AG04450 (cell line): ENCODE measurements at regions of chr10 and their contacts with region 1.

Region 1: DNA sequence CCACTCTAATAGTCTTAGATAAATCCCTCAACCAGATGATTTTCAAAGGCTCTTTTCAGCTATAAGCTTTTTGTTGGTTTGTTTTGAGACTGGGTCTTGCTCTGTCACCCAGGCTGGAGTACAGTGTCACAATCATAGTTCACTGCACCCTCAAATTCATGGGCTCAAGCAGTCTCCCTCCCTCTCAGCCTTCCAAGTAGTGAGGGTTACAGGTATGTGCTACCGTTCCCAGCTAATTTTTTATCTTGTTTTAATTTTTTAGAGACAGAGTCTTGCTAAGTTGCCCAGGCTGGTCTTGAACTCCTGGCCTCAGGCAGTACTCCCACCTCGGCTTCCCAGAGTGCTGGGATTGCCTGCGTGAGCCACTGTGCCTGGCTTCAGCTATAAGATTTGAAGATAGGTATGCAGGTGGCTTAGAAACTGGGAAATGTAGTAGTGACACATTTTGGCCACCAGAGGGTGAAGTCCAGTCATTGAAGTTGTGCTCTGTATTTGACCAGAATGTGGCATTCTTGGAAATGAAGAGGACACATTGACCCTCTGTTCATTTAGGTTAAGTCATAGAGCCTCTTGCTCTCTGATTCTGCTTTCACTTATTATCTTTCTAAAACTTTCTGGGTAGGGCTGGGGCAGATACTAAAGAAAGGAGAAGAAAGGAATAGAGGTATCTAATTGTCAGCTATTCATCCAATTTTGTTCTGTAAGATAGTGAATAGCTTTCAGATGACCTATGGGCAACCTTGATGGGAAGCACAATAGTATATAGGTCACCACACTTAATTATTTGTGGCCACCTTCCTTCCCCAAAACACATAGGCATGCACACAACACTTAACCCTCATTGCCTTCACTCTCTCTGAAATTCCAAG is 36.0 kb downstream of the R3HCC1L start:
- DNase-seq: peak; percentile 20
- H3K4me3 ChIP-seq: no peak overlapping the region
- H3K27ac ChIP-seq: no peak overlapping the region
- H3K27me3 ChIP-seq: no peaks in the 10 kb centered on the region
- CTCF ChIP-seq: peak; percentile 76

Region 2: GRCh38 chr10:98016772-98017475 is 153.6 kb before region 1 on chr10:
- CTCF ChIA-PET with region 1: no interaction called
- POLR2A ChIA-PET with region 1: no interaction called
- DNase-seq: no peak
- H3K4me3 ChIP-seq: no peak overlapping the region
- H3K27ac ChIP-seq: no peak overlapping the region
- H3K27me3 ChIP-seq: peaks cover 3% of the 10 kb centered on the region
- CTCF ChIP-seq: no peak

Region 3: GRCh38 chr10:98134431-98135221 is 35.9 kb before region 1 on chr10 and contains the start of gene R3HCC1L:
- CTCF ChIA-PET with region 1: interaction called, 11 read pairs
- POLR2A ChIA-PET with region 1: interaction called, 3 read pairs
- DNase-seq: peak; percentile 34
- H3K4me3 ChIP-seq: peak within 1 kb of the TSS; percentile 84
- H3K27ac ChIP-seq: peak within 1 kb of the TSS; percentile 80
- H3K27me3 ChIP-seq: no peaks in the 10 kb centered on the region
- CTCF ChIP-seq: no peak
- polyA plus RNA-seq, gene R3HCC1L: 13.0 and 14.4 TPM in 2 replicates

Region 4: GRCh38 chr10:98160026-98160425 is 10.5 kb before region 1 on chr10:
- CTCF ChIA-PET with region 1: interaction called, 39 read pairs
- POLR2A ChIA-PET with region 1: no interaction called
- DNase-seq: no peak
- H3K4me3 ChIP-seq: no peak overlapping the region
- H3K27ac ChIP-seq: no peak overlapping the region
- H3K27me3 ChIP-seq: no peaks in the 10 kb centered on the region
- CTCF ChIP-seq: no peak

Region 5: GRCh38 chr10:98195120-98195519 is 24.6 kb after region 1 on chr10:
- CTCF ChIA-PET with region 1: interaction called, 20 read pairs
- POLR2A ChIA-PET with region 1: no interaction called
- DNase-seq: no peak
- H3K4me3 ChIP-seq: no peak overlapping the region
- H3K27ac ChIP-seq: no peak overlapping the region
- H3K27me3 ChIP-seq: no peaks in the 10 kb centered on the region
- CTCF ChIP-seq: no peak

Region 6: DNA sequence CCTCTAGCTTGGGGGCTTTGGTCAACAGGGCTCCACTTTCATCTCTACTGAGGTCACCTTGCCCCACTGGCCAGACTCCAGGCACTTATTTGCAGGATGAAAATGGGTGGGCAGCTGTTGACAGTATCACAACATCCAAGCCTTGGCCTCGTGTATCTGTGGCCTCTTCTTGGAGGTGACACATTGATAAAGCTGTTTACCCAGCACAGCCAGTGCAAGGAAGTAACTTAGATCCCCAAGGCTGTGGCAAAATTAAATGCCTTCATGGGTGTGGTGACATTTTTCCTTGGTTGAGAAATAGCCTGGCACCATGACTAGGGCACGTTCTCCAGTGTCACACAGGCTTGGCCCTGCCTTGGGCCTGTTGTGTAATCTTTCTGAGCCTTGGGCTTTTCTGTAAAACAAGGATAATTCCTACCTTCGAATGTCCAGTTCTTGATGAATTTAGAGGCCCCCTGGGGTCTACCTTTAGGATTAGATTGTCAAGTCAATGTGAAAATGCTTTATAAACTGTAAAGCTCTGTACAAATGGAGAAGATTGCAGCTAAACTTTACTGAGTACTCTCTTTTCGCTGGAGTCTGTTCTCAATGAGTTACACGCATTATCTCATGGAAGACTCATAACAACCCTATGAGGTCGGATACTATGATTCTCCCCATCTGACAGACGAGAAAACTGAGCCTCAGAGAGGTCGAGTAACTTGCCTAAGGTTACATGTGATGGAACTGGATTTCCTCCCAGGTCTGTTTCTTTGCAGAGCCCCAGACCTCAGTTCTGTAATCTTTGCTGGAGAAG is 144.2 kb after region 1 on chr10:
- CTCF ChIA-PET with region 1: interaction called, 111 read pairs
- POLR2A ChIA-PET with region 1: no interaction called
- DNase-seq: no peak
- H3K4me3 ChIP-seq: no peak overlapping the region
- H3K27ac ChIP-seq: no peak overlapping the region
- H3K27me3 ChIP-seq: no peaks in the 10 kb centered on the region
- CTCF ChIP-seq: no peak